ENCODE measurements at regions of chr9 and their contacts with region 1.

Region 1: DNA sequence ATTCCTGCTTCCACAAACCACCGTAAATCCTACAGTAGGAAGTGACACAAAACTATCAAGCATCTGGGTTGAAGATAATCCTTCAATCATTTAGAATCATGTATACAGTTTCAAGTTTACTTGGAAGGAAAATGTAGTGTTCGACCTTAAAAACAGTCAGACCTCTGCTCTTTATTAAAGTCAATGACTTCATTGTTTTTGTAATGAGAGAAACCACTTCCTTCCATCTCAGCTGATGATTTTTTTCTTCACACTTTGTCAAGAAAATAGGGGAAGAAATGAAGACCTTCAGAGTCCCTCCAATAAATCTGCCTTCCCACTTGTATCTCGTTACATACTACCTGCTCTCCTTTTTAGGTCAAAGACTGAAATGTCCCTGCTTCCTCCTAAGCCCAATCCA is 30.1 kb downstream of the TUSC1 start:
- DNase-seq: no peak
- ATAC-seq: no peak
- H3K4me3 ChIP-seq: no peak overlapping the region
- H3K27ac ChIP-seq: no peak overlapping the region
- H3K4me1 ChIP-seq: no peaks in the 10 kb centered on the region
- H3K27me3 ChIP-seq: no peaks in the 10 kb centered on the region
- CTCF ChIP-seq: no peak

Region 2: DNA sequence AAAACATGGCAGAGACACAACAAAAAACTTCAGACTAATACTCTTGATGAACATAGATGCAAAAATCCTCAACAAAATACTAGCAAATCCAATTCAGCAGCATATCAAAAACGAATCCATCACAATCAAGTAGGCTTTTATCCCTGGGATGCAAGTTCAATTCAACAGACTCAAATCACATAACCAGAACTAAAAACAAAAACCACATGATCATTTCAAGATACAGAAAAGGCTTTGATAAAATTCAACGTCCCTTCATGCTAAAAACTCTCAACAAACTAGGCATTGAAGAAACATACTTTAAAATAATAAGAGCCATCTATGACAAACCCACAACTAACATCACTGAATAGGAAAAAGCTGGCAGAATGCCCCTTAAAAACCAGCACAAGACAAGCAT is 63.5 kb before region 1 on chr9:
- intact Hi-C with region 1: loop called in 1 of 10 experiments (anchors 10 kb)
- DNase-seq: no peak
- ATAC-seq: no peak
- H3K4me3 ChIP-seq: no peak overlapping the region
- H3K27ac ChIP-seq: no peak overlapping the region
- H3K4me1 ChIP-seq: no peaks in the 10 kb centered on the region
- H3K27me3 ChIP-seq: no peaks in the 10 kb centered on the region
- CTCF ChIP-seq: no peak

Region 3: DNA sequence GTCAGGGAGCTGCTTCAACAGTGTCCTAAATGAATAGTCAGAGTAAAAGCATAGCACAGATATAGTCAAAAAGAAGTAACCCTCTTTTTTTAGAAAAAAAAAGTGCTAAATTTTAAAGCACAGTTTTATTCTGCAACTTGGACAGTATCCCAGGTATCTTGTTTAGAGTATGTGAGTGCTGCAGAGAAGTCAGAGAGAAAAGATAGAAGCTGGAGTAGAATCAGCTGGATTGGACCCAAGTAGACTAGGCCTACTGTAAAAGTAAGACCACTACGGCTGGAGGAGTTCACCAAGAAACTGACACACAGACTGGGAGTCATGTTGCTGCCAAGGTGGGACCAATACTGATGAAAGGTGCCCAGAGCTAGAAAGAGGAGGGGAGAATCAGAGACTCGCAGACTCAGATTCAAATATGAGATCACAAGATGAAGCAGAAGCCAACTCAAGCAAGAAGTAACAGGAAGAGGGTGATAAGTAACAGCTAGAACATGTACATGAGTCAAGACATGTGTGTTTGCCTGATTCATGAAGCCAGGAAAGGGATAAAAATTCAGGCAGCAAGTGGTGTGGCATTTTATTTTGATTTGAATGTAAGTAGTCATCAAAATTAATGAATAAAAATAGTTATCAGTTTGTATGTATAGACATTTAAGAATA is 55.7 kb after region 1 on chr9:
- intact Hi-C with region 1: loop called in 2 of 10 experiments (anchors 10 kb)
- DNase-seq: no peak
- ATAC-seq: peak in 1 of 8 donors; percentile 29
- H3K4me3 ChIP-seq: no peak overlapping the region
- H3K27ac ChIP-seq: no peak overlapping the region
- H3K4me1 ChIP-seq: no peaks in the 10 kb centered on the region
- H3K27me3 ChIP-seq: no peaks in the 10 kb centered on the region
- CTCF ChIP-seq: no peak

Measured in heart right ventricle (tissue), 16 donors.